Activated naive CD4-positive, alpha-beta T cell treated with anti-CD3 and anti-CD28 coated beads for 36 hours (primary cell): ENCODE measurements at regions of chr1 and their contacts with region 1.

Region 1: DNA sequence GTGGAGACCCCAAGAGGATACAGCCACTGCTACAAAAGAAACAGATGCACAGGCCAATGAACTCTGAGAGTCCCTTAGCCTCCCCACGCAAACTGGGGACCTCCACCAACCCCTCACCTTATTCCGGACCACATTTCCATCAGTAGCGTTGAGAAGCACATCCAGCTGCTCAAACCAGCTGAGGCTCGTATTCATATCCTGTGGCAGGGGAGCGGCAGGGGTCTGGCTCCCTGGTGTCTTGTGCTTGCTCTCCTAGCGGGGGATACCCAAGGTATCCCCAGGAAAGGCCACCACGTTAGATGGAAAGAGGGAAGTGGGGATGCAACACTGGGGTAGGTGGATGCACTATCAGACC is 481 bp downstream of the CCDC163 start:
- DNase-seq: peak; percentile 30
- H3K4me3 Mint-ChIP-seq: peak overlapping the region; percentile 91
- H3K27ac Mint-ChIP-seq: peak overlapping the region; percentile 84
- H3K4me1 Mint-ChIP-seq: peaks cover 32% of the 10 kb centered on the region
- H3K27me3 Mint-ChIP-seq: no peaks in the 10 kb centered on the region

Region 2: GRCh38 chr1:45339789-45340570 is 159.4 kb before region 1 on chr1 and contains the starts of genes MUTYH and TOE1:
- CTCF ChIA-PET with region 1: interaction called, 4 read pairs
- intact Hi-C with region 1: loop called (anchors 1 kb)
- DNase-seq: peak; percentile 95
- H3K4me3 Mint-ChIP-seq: peak within 1 kb of the TSS; percentile 100
- H3K27ac Mint-ChIP-seq: peak within 1 kb of the TSS; percentile 100
- H3K4me1 Mint-ChIP-seq: peaks cover 35% of the 10 kb centered on the region
- H3K27me3 Mint-ChIP-seq: no peaks in the 10 kb centered on the region
- total RNA-seq, gene MUTYH: 42.0 to 45.0 TPM
- total RNA-seq, gene TOE1: 23.0 to 23.8 TPM

Region 3: GRCh38 chr1:45521398-45522323 is 22.3 kb after region 1 on chr1 and contains the start of gene PRDX1:
- CTCF ChIA-PET with region 1: interaction called, 5 read pairs
- intact Hi-C with region 1: loop called (anchors 1 kb)
- DNase-seq: peak; percentile 96
- H3K4me3 Mint-ChIP-seq: peak within 1 kb of the TSS; percentile 93
- H3K27ac Mint-ChIP-seq: peak within 1 kb of the TSS; percentile 88
- H3K4me1 Mint-ChIP-seq: peaks cover 46% of the 10 kb centered on the region
- H3K27me3 Mint-ChIP-seq: no peaks in the 10 kb centered on the region
- total RNA-seq, gene PRDX1: 596 to 641 TPM

Region 4: DNA sequence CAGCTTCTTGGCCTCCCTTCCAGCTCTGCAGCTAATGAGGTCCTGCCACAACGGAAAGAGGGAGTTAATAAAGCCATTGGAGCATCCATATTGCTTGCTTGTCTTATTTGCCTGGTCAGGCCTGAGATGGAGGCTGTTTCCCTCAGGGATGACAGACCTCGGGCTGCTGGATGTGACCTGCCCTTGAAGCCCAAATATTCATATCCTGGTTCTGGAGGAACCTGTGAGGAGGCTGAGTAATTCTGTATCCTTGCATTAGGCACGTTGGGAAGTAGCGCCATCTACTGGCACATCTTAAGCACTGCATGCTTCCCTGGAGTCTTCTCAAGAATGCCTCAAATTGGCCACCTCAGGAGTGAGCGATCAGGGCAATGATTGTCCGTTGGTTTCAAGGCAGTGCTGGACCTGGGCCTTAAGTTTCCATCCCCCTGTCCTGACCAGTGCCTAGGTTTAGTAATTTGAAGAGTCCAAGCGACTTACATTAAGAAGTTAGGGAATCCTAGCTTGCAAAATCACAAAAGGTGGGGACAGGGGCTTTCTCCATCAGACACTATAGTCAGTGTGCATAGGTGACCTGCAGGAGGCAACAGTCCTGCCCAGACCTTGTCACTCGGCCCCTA is 70.7 kb after region 1 on chr1:
- CTCF ChIA-PET with region 1: interaction called, 23 read pairs
- intact Hi-C with region 1: no loop called
- DNase-seq: peak; percentile 87
- H3K4me3 Mint-ChIP-seq: no peak overlapping the region
- H3K27ac Mint-ChIP-seq: peak overlapping the region; percentile 34
- H3K4me1 Mint-ChIP-seq: peaks cover 2% of the 10 kb centered on the region
- H3K27me3 Mint-ChIP-seq: no peaks in the 10 kb centered on the region